ENCODE measurements at regions of chr16 and their contacts with region 1.

Region 1: DNA sequence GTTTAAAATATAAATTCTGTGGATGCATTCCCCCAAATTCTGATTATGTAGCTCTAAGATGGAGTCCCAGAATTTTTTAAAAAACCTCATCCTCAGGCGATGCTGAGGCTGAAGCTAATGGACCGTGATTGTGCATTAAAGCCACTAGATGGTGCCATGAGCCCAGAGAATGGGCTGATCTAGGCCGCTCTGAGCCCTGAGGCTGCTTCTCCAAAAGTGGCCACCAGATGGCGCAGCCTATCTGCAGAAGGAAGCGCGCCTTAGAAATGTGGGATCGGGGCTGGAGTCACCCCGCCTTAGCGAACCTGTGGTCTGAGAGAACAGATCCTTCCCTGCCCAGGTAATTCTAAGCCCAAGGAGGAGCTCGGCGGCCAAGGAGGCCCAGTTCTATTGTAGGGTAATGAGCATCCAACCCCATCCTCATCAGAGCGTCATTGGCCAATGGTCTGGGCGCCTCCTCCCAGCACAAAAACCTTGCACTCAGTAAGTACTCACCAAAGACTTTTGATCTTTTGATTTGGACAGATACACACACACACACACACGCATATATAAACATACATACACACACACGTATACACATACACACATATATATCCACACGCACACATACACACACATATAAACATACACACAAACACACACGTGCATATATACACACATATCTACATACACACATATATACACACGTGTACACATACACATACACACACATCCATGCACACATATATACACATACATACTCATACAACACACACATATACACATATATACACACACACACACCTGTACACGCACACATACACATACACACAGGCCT is 13.7 kb upstream of the MMP2 start:
- DNase-seq: peak; percentile 83 to 94 (median 93)
- H3K4me3 ChIP-seq: no peak overlapping the region
- H3K27ac ChIP-seq: no peak overlapping the region
- H3K4me1 ChIP-seq: no peaks in the 10 kb centered on the region
- H3K27me3 ChIP-seq: no peaks in the 10 kb centered on the region
- CTCF ChIP-seq: peak; percentile 100
- EP300 ChIP-seq: no peak
- POLR2A ChIP-seq: no peak

Region 2: DNA sequence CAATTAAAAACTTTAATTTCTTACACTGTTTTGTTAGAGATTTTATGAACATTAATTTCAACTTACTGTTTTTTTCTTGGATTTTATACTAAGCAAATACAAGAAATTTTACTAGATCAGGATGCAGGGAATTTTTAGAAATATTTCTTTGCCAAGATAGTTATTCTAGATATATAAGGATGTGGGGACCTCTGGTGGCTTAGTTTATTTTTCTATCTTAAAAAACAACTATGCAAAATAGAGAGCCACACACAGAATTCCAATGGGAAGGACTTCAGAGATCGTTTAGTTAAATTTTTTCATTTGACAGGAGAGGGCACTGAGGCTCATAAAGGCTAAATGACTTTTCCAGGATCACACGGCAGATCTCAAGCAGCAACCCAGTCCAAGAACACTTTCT is 78.2 kb after region 1 on chr16:
- intact Hi-C with region 1: loop called (anchors 2 to 5 kb)
- DNase-seq: no peak
- H3K4me3 ChIP-seq: no peak overlapping the region
- H3K27ac ChIP-seq: no peak overlapping the region
- H3K4me1 ChIP-seq: no peaks in the 10 kb centered on the region
- H3K27me3 ChIP-seq: no peaks in the 10 kb centered on the region
- CTCF ChIP-seq: peak; percentile 21 to 60 (median 45)
- EP300 ChIP-seq: no peak
- POLR2A ChIP-seq: no peak

Region 3: GRCh38 chr16:55701442-55702319 is 236.4 kb after region 1 on chr16:
- intact Hi-C with region 1: loop called (anchors 5 to 10 kb)
- DNase-seq: peak; percentile 30 to 56 (median 35)
- H3K4me3 ChIP-seq: no peak overlapping the region
- H3K27ac ChIP-seq: no peak overlapping the region
- H3K4me1 ChIP-seq: no peaks in the 10 kb centered on the region
- H3K27me3 ChIP-seq: no peaks in the 10 kb centered on the region
- CTCF ChIP-seq: no peak
- EP300 ChIP-seq: no peak
- POLR2A ChIP-seq: no peak

Region 4: GRCh38 chr16:55706739-55707384 is 241.6 kb after region 1 on chr16:
- intact Hi-C with region 1: loop called in 3 of 4 experiments (anchors 5 to 10 kb)
- DNase-seq: no peak
- H3K4me3 ChIP-seq: no peak overlapping the region
- H3K27ac ChIP-seq: no peak overlapping the region
- H3K4me1 ChIP-seq: no peaks in the 10 kb centered on the region
- H3K27me3 ChIP-seq: no peaks in the 10 kb centered on the region
- CTCF ChIP-seq: no peak
- EP300 ChIP-seq: no peak
- POLR2A ChIP-seq: no peak

Region 5: DNA sequence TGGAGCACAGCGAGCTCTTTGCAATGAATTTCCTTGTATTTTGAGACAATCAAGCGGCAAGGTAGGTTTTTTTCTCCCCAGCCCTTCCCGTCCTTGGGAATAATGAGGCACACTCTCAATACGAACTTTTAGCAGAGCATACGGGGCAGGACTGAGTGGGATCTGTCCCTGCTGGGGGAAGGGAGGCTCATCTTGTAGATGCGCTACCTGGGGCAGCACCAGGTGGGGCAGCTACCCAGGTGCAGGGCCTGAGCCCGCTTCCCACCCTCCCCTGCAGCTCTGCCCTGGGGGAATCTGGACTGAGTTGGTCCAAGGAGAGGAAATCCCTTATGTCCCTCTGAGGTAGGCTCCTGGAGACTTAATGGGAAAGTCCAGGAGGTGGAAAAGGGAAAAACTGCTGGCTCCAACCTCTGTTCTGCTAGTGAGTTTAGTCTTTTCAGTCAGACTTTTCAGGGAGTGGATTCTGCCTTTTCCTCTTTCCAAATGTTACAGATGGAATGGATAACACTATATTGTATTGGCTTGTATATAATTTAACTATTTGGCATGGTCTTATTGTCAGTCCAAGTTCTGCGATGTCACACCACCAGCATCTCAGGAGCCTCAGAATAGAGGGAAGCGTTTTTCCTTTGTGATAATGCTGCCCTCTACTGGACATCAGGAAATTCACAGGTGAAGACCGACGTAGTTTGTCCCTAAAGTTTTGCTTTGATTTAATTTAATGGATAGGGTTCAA is 377.2 kb after region 1 on chr16:
- intact Hi-C with region 1: loop called in 3 of 4 experiments (anchors 5 to 10 kb)
- DNase-seq: no peak
- H3K4me3 ChIP-seq: no peak overlapping the region
- H3K27ac ChIP-seq: no peak overlapping the region
- H3K4me1 ChIP-seq: no peaks in the 10 kb centered on the region
- H3K27me3 ChIP-seq: no peaks in the 10 kb centered on the region
- CTCF ChIP-seq: peak; percentile 16 to 54 (median 47)
- EP300 ChIP-seq: no peak
- POLR2A ChIP-seq: no peak